H1 (cell line): ENCODE measurements at regions of chr12 and their contacts with region 1.

Region 1: DNA sequence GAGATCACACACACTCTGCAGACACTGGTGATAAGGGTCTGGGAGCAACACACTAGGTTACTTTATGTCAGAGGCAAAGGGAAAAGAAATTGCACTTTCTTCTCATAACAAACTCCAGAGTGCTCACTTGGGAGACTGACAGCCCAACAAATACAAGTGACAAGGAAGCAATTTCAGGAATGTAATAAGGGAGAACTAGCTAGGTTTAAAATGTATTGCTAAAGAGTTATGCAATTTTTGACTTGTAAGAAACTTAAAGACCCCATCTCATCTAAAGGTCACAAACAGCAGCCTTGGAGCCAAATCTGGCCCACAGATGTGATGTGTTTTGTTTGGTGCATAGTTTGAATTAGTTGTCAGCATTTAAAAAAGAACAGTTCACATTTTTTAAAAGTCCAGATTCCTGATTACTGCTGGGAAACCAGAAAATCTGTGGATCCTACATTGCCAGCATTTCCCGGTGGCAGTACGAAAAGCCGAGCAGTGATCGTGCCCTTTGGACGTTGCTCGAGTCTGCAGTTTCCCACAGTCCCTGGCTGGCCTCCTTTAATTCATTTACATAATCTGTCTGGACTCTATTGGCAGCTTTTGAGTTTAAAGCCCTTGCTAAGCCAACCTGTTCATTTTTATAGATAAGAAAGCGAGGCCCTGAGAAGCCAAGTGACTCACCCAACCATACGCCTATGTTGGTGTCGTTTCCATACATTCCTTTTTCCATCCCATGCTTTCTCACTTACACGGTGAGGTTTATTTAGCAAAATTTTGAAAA is 42.0 kb upstream of the ETV6 start:
- DNase-seq: no peak
- H3K4me3 ChIP-seq: no peak overlapping the region
- H3K27ac ChIP-seq: no peak overlapping the region
- H3K4me1 ChIP-seq: peaks cover 5 to 22% (median 17%) of the 10 kb centered on the region in 4 experiments; a peak in 6 of 7 replicates
- H3K27me3 ChIP-seq: no peaks in the 10 kb centered on the region
- CTCF ChIP-seq: no peak
- EP300 ChIP-seq: no peak
- POLR2A ChIP-seq: no peak
- RAD21 ChIP-seq: no peak

Region 2: GRCh38 chr12:11595080-11595479 is 12.4 kb before region 1 on chr12:
- CTCF ChIA-PET with region 1: interaction called, 4 read pairs
- POLR2A ChIA-PET with region 1: interaction called, 35 read pairs
- DNase-seq: no peak
- H3K4me3 ChIP-seq: no peak overlapping the region
- H3K27ac ChIP-seq: no peak overlapping the region
- H3K4me1 ChIP-seq: peaks cover 0 to 4% (median 3%) of the 10 kb centered on the region in 4 experiments; a peak in 6 of 7 replicates
- H3K27me3 ChIP-seq: no peaks in the 10 kb centered on the region
- CTCF ChIP-seq: no peak
- EP300 ChIP-seq: no peak
- POLR2A ChIP-seq: no peak
- RAD21 ChIP-seq: no peak

Region 3: GRCh38 chr12:11621797-11622423 is 14.4 kb after region 1 on chr12:
- CTCF ChIA-PET with region 1: interaction called, 5 read pairs
- POLR2A ChIA-PET with region 1: interaction called, 15 read pairs
- DNase-seq: no peak
- H3K4me3 ChIP-seq: no peak overlapping the region
- H3K27ac ChIP-seq: no peak overlapping the region
- H3K4me1 ChIP-seq: peaks cover 0 to 17% (median 10%) of the 10 kb centered on the region in 4 experiments; a peak in 5 of 7 replicates
- H3K27me3 ChIP-seq: no peaks in the 10 kb centered on the region
- CTCF ChIP-seq: no peak
- EP300 ChIP-seq: no peak
- POLR2A ChIP-seq: no peak
- RAD21 ChIP-seq: peak; percentile 44 to 49